ENCODE measurements at regions of chr5 and their contacts with region 1.

Region 1: GRCh38 chr5:167945542-167946384 is 345.7 kb upstream of the WWC1 start:
- DNase-seq: peak; percentile 50 to 75
- ATAC-seq: peak; percentile 64
- H3K4me3 ChIP-seq: no peak overlapping the region
- H3K27ac ChIP-seq: peak overlapping the region; percentile 40 to 96
- H3K4me1 ChIP-seq: peaks cover 0 to 3% of the 10 kb centered on the region in 2 donors
- H3K27me3 ChIP-seq: no peaks in the 10 kb centered on the region

Region 2: GRCh38 chr5:167853421-167853820 is 92.3 kb before region 1 on chr5:
- intact Hi-C with region 1: loop called in 1 of 2 experiments (anchors 5 kb)
- DNase-seq: no peak
- ATAC-seq: no peak
- H3K4me3 ChIP-seq: no peak overlapping the region
- H3K27ac ChIP-seq: no peak overlapping the region
- H3K4me1 ChIP-seq: peaks cover 0 to 10% of the 10 kb centered on the region in 2 donors
- H3K27me3 ChIP-seq: no peaks in the 10 kb centered on the region

Region 3: DNA sequence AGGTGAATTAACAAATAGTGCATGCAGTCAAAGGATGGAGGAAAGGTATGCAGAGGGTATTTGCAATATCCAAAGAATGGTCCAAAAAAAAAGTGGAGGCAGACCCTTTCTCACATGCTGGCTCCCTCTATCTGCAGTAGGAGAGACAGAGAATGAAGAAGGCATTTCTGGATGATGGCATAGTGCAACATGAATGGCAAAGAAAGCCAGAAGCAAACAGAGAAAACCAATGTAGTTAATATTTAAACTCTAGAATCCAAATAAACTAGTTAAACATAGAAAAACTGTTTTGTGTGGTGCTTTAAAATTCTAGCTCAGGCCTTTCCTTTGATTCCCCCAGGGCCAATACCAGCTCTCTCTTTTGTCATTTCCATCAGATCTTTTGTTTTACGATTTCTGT is 57.4 kb before region 1 on chr5:
- intact Hi-C with region 1: no loop called
- DNase-seq: no peak
- ATAC-seq: no peak
- H3K4me3 ChIP-seq: no peak overlapping the region
- H3K27ac ChIP-seq: no peak overlapping the region
- H3K4me1 ChIP-seq: no peaks in the 10 kb centered on the region
- H3K27me3 ChIP-seq: no peaks in the 10 kb centered on the region

Region 4: GRCh38 chr5:167985373-167985772 is 39.6 kb after region 1 on chr5:
- intact Hi-C with region 1: no loop called
- DNase-seq: no peak
- ATAC-seq: no peak
- H3K4me3 ChIP-seq: no peak overlapping the region
- H3K27ac ChIP-seq: no peak overlapping the region
- H3K4me1 ChIP-seq: no peaks in the 10 kb centered on the region
- H3K27me3 ChIP-seq: no peaks in the 10 kb centered on the region